ENCODE measurements at regions of chr16 and their contacts with region 1.

Region 1: GRCh38 chr16:11255737-11256660 is at the start of gene SOCS1:
- DNase-seq: peak; percentile 90
- H3K4me3 Mint-ChIP-seq: peak within 1 kb of the TSS; percentile 99
- H3K27ac Mint-ChIP-seq: peak within 1 kb of the TSS; percentile 90
- H3K4me1 Mint-ChIP-seq: peaks cover 51% of the 10 kb centered on the region
- H3K27me3 Mint-ChIP-seq: peaks cover 8% of the 10 kb centered on the region
- total RNA-seq, gene SOCS1: 158 and 161 TPM in 2 replicates

Region 2: GRCh38 chr16:10876799-10877341 is 379.1 kb before region 1 on chr16 and contains the start of gene CIITA:
- intact Hi-C with region 1: loop called (anchors 10 kb)
- DNase-seq: peak; percentile 53
- H3K4me3 Mint-ChIP-seq: peak within 1 kb of the TSS; percentile 86
- H3K27ac Mint-ChIP-seq: peak within 1 kb of the TSS; percentile 59
- H3K4me1 Mint-ChIP-seq: peaks cover 88% of the 10 kb centered on the region
- H3K27me3 Mint-ChIP-seq: peaks cover 14% of the 10 kb centered on the region
- total RNA-seq, gene CIITA: 12.0 and 13.0 TPM in 2 replicates

Region 3: GRCh38 chr16:10988164-10988803 is 267.7 kb before region 1 on chr16:
- intact Hi-C with region 1: loop called (anchors 1 kb)
- DNase-seq: peak; percentile 64
- H3K4me3 Mint-ChIP-seq: peak overlapping the region; percentile 65
- H3K27ac Mint-ChIP-seq: peak overlapping the region; percentile 93
- H3K4me1 Mint-ChIP-seq: peaks cover 92% of the 10 kb centered on the region
- H3K27me3 Mint-ChIP-seq: no peaks in the 10 kb centered on the region

Region 4: DNA sequence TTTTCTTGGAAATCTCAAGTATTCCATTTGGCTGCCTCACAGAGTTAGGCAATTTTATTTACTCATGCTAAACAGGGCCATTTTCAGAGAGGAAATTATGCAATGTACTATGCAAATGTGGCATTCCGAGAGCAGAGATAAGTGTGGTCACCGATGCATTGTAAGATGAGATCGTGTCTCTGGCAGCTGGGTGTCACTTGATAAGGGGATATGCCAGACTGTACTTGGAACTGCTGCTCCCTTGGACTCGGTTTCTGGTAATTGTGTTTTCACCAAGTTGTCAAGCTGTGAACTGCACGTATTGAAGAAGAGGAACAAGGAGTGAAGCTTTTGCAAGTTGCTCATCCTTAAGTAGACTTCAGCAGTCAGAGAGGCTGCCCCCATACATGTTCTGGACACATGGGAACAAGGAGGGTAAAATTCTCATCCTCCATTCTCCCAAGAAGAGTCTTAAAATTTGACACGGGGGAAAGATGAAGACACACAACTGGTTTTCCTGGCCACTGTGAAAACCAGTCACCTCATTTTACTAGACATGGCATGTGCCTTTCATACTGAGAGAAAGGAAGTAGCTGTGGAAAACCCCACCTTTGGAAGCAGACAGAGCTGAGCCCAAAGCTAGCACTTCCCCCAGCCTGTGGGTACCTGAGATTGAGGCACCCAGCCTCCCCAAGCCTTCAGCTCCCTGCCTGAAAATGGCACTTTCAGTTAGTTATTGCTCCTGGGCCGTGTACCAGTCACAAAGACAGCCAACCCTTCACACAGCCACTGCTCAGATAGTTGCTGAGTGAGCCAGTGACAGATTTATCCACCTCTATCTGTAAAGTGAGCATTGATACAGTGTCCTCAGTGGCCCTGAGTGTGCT is 150.7 kb before region 1 on chr16:
- intact Hi-C with region 1: loop called (anchors 1 kb)
- DNase-seq: peak; percentile 44
- H3K4me3 Mint-ChIP-seq: peak overlapping the region; percentile 65
- H3K27ac Mint-ChIP-seq: peak overlapping the region; percentile 88
- H3K4me1 Mint-ChIP-seq: peaks cover 75% of the 10 kb centered on the region
- H3K27me3 Mint-ChIP-seq: no peaks in the 10 kb centered on the region

Region 5: DNA sequence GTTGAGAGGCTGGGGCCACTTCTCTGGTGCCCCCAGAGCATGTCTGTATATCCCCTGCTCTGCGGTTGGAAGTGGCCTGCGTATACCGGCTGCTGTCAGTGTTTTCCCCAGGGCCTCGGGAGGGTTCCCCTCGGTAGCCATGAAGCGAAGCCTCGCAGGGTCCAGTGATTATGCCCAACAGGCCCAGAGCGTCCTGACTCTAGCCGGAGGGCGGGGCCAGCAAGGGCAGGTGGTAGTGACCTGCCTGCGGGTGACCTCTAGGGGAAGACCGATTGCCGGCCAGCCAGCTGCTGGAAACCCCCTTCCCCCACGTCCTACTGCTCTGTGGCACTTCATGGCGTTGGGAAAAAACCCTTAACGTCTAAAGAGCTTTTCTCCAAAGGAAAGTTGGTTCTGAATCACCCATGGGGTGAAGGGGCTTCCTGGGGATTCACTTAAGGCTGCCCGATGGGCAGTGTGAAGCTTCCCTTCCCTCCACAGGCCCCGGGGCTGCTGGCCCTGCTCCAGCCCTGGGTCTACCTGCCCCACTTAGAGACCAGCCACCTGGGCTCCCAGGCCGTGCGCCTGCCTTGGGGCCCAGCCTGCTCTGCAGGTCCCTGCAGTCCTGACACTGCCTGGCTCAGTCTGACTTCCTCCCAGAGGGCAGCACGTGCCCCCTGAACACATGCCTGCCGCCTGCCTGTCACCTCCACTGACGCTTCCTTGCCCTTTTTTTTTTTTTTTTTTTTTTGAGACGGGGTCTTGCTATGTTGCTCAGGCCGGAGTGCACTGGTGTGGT is 72.8 kb before region 1 on chr16:
- intact Hi-C with region 1: no loop called
- DNase-seq: no peak
- H3K4me3 Mint-ChIP-seq: no peak overlapping the region
- H3K27ac Mint-ChIP-seq: peak overlapping the region; percentile 36
- H3K4me1 Mint-ChIP-seq: peaks cover 26% of the 10 kb centered on the region
- H3K27me3 Mint-ChIP-seq: no peaks in the 10 kb centered on the region

Region 6: GRCh38 chr16:11232852-11233726 is 22.9 kb before region 1 on chr16:
- intact Hi-C with region 1: loop called (anchors 1 kb)
- DNase-seq: peak; percentile 91
- H3K4me3 Mint-ChIP-seq: peak overlapping the region; percentile 59
- H3K27ac Mint-ChIP-seq: peak overlapping the region; percentile 95
- H3K4me1 Mint-ChIP-seq: peaks cover 89% of the 10 kb centered on the region
- H3K27me3 Mint-ChIP-seq: no peaks in the 10 kb centered on the region

Region 7: DNA sequence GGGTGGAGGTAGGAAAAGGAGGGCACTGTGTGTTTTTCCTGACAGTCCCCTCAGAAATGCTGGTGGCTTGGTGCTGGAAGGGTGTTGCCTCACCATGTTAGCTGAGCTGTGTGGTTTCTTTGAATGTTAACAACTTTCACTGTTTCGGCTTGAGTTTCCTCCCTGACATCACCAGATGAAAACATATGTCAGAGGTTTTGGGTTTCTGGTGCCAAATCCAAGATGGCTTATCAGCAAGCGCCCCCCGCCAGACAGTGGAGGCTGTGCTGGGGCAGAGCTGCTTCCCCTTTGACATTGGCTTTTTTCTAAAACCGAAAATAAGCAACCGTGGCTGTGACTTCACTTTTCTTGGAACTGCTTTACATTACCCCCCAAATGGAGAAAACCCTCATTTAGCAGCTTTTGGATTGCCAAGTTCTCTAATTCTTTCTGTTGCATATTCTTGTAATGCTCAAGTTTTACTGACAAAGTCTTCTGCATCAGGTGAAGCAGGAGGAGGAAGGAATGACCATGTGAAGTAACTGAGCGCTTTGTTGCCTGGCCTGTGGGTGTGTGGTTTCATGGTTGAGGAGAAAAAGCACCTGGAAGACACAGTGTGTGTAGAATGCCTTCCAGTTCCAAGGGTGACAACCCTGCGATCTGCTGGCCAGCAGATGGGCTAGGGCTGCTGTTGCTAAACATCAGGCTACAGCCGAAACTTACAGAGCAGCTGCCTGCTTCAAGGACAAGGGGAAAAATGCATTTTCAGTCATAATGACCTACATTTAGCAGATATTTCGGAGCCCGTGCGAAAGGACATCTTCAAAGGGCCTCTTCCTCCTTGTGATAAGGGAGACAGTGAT is 99.0 kb after region 1 on chr16:
- intact Hi-C with region 1: loop called (anchors 1 kb)
- DNase-seq: peak; percentile 80
- H3K4me3 Mint-ChIP-seq: peak overlapping the region; percentile 71
- H3K27ac Mint-ChIP-seq: peak overlapping the region; percentile 83
- H3K4me1 Mint-ChIP-seq: peaks cover 64% of the 10 kb centered on the region
- H3K27me3 Mint-ChIP-seq: peaks cover 4% of the 10 kb centered on the region

Region 8: GRCh38 chr16:11915644-11916523 is 659.9 kb after region 1 on chr16 and contains the start of gene GSPT1:
- intact Hi-C with region 1: loop called (anchors 10 kb)
- DNase-seq: peak; percentile 99
- H3K4me3 Mint-ChIP-seq: peak within 1 kb of the TSS; percentile 91
- H3K27ac Mint-ChIP-seq: peak within 1 kb of the TSS; percentile 94
- H3K4me1 Mint-ChIP-seq: peaks cover 32% of the 10 kb centered on the region
- H3K27me3 Mint-ChIP-seq: peaks cover 8% of the 10 kb centered on the region
- total RNA-seq, gene GSPT1: 207 and 214 TPM in 2 replicates